Head of caudate nucleus (tissue), 42 donors: ENCODE measurements at regions of chr7 and their contacts with region 1.

Region 1: DNA sequence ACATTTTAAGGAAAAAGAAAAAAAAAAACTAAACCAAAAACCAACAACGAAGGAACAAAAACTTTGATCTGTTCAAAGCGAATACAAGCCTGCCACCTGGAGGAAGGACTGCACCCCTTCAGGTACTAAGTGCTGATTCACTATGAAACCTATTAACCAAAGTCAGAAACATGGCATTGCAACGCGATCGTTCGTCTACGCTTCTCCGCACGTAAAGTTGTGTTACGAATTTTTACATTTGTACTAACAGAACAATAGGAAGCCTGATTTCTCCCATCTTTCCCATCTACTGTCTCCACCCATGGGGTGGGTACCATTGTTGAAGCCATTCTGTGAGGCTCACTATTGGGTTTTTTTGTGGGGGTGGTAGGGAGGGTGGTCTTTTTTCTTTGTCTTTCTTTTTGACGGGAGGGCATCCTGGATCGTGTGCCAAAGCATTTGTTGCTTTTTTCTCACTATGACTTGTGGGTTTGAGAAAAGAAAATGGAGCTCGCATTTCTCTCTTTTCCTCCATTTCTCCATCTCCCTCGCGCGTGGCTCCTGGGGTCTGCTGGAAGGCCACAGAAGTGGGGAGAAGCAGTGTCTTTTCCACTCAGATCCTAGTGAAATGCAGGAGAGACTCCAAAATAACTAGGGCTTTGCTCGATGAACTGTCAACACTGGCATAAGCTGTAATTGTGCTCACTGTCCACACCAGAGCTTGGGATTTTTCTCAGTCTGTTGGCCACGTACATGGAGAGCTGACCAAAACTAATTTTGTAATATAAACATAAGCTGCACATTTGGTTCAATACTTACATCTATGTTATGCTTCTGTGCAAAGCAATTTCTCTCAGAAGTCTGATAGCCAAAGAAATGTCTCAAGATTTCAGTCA is 100.9 kb upstream of the YAE1 start:
- DNase-seq: peak in 41 of 42 donors; percentile 8 to 79 (median 52)

Region 2: GRCh38 chr7:38932509-38933168 is 532.7 kb before region 1 on chr7:
- intact Hi-C with region 1: loop called (anchors 10 kb)
- DNase-seq: peak; percentile 13 to 84 (median 59)

Region 3: DNA sequence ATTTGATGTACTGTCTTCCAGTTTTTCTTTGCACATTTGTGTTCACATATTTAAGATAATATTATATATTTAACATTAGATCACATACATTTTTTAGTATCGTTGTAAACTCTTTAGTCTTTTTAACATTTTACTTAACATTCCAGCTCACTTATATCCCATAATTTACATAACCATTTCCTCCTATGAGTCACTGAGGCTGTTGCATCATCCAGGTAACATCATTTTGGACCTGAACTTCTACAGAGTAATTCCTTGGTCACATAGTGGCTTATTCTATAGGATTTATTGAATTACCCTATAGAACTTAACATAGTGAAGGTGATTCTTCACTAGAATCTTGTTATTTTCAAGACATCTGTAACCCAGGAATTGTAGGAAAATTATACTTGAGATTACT is 293.2 kb before region 1 on chr7:
- intact Hi-C with region 1: no loop called
- DNase-seq: no peak